ENCODE measurements at regions of chr6 and their contacts with region 1.

Region 1: DNA sequence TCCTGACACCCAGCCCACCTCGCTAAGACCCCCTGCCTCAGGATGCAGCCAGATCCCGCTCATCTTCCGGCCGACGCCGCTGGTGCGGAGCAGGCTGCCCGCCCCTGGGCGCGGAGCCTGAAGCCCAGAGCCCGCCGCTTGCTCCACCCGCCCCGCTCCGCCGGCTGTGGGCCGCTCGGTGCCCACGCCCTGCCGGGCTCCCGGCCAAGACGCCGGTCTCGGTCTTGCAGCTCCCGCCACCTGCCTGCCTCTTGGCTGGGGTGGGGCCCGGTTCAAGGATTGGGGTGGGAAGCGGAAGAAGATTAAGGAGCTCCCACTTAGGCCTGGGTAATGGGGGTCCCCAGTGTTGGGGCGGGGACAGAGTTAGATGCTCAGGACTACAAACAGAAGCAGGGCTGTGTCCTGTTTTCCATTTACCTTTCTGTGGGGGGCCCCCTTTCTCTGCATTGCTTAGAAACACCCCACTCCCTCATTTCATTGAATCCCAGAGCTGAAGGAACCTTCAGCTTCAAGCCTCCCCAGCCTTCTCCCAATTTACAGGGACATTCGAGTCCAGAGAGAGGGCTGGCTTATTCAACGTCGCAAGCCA is 72.6 kb downstream of the MDGA1 start:
- DNase-seq: peak; percentile 74

Region 2: GRCh38 chr6:37566111-37566949 is 58.8 kb before region 1 on chr6:
- in situ Hi-C with region 1: loop called (anchors 10 kb)
- DNase-seq: no peak

Measured in Caki2 (cell line).